Posterior vena cava (tissue), 2 donors: ENCODE measurements at regions of chrX and their contacts with region 1.

Region 1: GRCh38 chrX:34809096-34809495 is 133.5 kb upstream of the FAM47B start:
- DNase-seq: no peak

Region 2: DNA sequence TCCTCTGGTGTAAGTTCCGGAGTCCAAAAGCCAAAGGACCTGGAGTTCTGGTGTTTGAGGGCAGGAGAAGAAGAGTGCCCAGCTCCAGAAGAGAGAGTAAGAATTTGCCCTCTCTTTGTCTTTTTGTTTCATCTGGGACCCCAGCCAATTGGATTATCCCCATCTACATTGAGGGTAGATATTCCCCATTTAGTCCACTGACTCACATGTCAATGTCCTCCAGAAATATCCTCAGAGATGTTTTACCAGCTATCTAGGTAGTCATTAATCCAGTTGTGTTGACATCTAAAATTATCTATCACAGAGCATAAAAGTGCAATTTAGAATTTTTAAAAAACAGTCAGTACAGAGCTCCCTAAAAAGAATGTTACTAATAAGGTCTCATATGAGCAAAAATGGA is 19.1 kb before region 1 on chrX:
- intact Hi-C with region 1: loop called in 1 of 2 experiments (anchors 1 kb)
- DNase-seq: no peak